ENCODE measurements at regions of chr2 and their contacts with region 1.

Region 1: DNA sequence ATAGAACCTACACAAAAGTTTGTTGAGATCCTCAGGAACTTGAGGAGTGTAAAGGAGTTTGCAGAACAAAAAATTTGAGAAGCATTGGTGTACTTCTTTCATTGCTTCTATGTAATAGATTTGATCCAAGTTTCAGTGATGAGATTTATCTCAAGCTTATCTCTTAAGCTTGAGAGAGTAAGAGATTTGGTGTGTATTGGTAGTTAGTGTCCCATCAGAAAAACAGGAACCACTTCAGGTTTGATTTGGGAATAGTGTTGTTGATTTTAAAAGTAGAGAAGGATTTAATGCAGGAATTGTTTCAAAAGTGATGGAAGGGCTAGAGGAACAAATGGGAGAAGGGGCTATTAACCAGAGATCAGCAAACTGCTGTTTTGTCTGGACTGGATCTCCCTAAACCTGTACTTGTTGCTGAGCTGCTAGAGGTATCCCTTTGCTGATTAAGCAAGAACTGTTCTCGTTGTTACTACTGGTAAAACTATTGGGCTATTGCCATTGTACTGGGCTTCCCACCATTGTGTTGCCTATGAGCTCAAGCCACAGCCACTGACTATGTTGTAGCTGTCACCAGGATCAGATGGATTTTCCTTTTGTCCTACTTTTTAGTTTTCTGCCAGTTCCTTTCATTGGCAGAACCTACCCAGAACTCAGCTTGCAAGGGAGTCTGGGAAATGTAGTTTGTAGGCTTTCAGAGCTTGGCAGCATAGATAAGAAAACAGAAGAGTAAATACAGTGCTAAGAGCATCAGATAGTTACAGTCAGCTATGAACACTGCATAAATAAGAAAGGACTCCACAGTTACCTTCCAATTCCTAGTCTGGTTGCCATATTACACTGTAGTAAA is 39.3 kb downstream of the RAB10 start:
- DNase-seq: peak in 1 of 2 experiments; percentile 45
- ATAC-seq: peak; percentile 26 to 51; a peak in 3 of 6 replicates
- H3K4me3 ChIP-seq: no peak overlapping the region
- H3K27ac ChIP-seq: peak overlapping the region in 1 of 2 experiments; percentile 21; a peak in 3 of 6 replicates
- H3K4me1 ChIP-seq: peaks cover 97% of the 10 kb centered on the region
- CTCF ChIP-seq: no peak
- EP300 ChIP-seq: no peak
- POLR2A ChIP-seq: no peak
- RAD21 ChIP-seq: no peak

Region 2: DNA sequence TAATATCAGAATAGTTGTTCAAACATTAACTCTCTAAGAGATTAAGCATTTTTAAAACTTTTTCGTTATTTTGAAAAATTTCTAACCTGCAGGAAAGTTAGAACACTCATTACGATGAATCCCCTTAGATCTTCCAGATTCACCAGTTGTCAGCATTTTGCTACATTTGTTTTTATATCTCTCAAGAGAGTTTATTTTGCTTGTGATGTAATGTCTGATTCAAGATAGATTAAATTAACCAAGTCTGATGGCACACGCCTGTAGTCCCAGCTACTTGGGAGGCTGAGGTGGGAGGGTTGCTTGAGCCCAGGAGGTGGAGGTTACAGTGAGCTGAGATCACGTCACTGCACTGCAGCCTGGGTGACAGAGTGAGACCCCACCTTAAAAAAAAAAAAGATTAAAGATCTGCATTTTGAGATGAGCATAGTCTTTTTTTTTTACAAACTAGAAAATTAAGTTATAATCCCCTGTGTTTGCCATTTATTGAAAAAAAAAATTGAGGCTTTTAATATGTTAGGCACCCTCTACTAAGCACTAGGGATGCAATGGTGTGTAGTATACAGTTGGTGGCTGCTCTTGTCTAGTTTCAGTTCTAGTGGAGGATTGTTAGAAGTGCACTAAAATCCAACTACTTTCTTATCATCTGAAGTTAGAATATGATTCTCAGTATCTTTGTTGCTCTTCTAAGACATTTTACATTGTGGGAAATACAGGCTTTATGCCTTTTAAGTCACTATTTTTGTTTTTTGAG is 18.4 kb before region 1 on chr2:
- CTCF ChIA-PET with region 1: interaction called, 4 read pairs
- POLR2A ChIA-PET with region 1: interaction called, 10 read pairs
- DNase-seq: no peak
- ATAC-seq: peak in 1 of 2 experiments; percentile 53; a peak in 3 of 6 replicates
- H3K4me3 ChIP-seq: no peak overlapping the region
- H3K27ac ChIP-seq: no peak overlapping the region
- H3K4me1 ChIP-seq: peaks cover 74% of the 10 kb centered on the region
- CTCF ChIP-seq: no peak
- EP300 ChIP-seq: no peak
- POLR2A ChIP-seq: no peak
- RAD21 ChIP-seq: no peak

Region 3: GRCh38 chr2:26126074-26126473 is 52.9 kb after region 1 on chr2:
- CTCF ChIA-PET with region 1: no interaction called
- POLR2A ChIA-PET with region 1: no interaction called
- DNase-seq: no peak
- ATAC-seq: no peak
- H3K4me3 ChIP-seq: no peak overlapping the region
- H3K27ac ChIP-seq: 0 out of 6 replicates have a peak overlapping the region, but pooled peaks of 1 of the 2 experiments have one; percentile 1
- H3K4me1 ChIP-seq: peaks cover 43% of the 10 kb centered on the region
- CTCF ChIP-seq: no peak
- EP300 ChIP-seq: no peak
- POLR2A ChIP-seq: no peak
- RAD21 ChIP-seq: no peak